Naive thymus-derived CD4-positive, alpha-beta T cell (primary cell): ENCODE measurements at regions of chr3 and their contacts with region 1.

Region 1: GRCh38 chr3:169812332-169813235 is at the starts of genes LRRC34 and LRRIQ4:
- DNase-seq: peak; percentile 43 to 72 (median 52)
- ATAC-seq: peak; percentile 72
- H3K4me3 ChIP-seq: peak within 1 kb of the TSS; percentile 85
- H3K4me3 Mint-ChIP-seq: peak within 1 kb of the TSS; percentile 79 to 91 (median 86)
- H3K27ac ChIP-seq: peak within 1 kb of the TSS; percentile 59
- H3K27ac Mint-ChIP-seq: peak within 1 kb of the TSS; percentile 3 to 92 (median 71)
- H3K4me1 ChIP-seq: peaks cover 4 to 6% of the 10 kb centered on the region in 2 donors
- H3K4me1 Mint-ChIP-seq: peaks cover 21 to 40% (median 25%) of the 10 kb centered on the region in 7 donors
- H3K27me3 ChIP-seq: no peaks in the 10 kb centered on the region
- H3K27me3 Mint-ChIP-seq: peaks cover 0 to 18% (median 2%) of the 10 kb centered on the region in 5 donors
- total RNA-seq, gene LRRC34: 0.30 to 3.7 (median 0.42) TPM
- total RNA-seq, gene LRRIQ4: 0.12 TPM in 1 of 5 experiments, not detected in the others

Region 2: GRCh38 chr3:169218314-169218983 is 594.1 kb before region 1 on chr3:
- CTCF ChIA-PET with region 1: no interaction called
- POLR2A ChIA-PET with region 1: no interaction called
- intact Hi-C with region 1: no loop called
- DNase-seq: no peak
- ATAC-seq: no peak
- H3K4me3 ChIP-seq: no peak overlapping the region
- H3K4me3 Mint-ChIP-seq: no peak overlapping the region
- H3K27ac ChIP-seq: no peak overlapping the region
- H3K27ac Mint-ChIP-seq: no peak overlapping the region
- H3K4me1 ChIP-seq: no peaks in the 10 kb centered on the region
- H3K4me1 Mint-ChIP-seq: no peaks in the 10 kb centered on the region
- H3K27me3 ChIP-seq: no peaks in the 10 kb centered on the region
- H3K27me3 Mint-ChIP-seq: peaks cover 0 to 12% (median 0%) of the 10 kb centered on the region in 5 donors

Region 3: DNA sequence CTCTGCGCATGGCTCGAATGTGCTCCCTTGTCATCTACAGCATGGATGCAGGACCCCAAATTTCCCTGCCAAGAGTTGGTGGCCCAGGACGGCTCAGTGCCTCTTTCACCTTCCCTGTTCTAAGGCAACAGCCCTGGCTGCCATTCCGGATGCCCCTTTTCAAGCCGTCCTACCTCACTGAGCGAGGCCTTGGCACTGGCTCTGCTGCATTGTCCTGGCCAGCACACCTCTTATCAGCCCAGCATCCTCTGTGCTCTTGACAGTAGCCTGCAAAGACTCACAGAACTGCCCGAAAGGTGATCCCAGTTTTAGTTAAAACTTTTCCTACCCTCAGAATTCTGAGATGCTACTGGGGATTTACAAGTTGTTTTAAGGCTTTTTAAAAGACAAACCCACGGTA is 271.1 kb before region 1 on chr3:
- CTCF ChIA-PET with region 1: no interaction called
- POLR2A ChIA-PET with region 1: no interaction called
- intact Hi-C with region 1: no loop called
- DNase-seq: no peak
- ATAC-seq: no peak
- H3K4me3 ChIP-seq: no peak overlapping the region
- H3K4me3 Mint-ChIP-seq: no peak overlapping the region
- H3K27ac ChIP-seq: no peak overlapping the region
- H3K27ac Mint-ChIP-seq: no peak overlapping the region
- H3K4me1 ChIP-seq: no peaks in the 10 kb centered on the region
- H3K4me1 Mint-ChIP-seq: no peaks in the 10 kb centered on the region
- H3K27me3 ChIP-seq: no peaks in the 10 kb centered on the region
- H3K27me3 Mint-ChIP-seq: peaks cover 3 to 12% (median 6%) of the 10 kb centered on the region in 5 donors

Region 4: GRCh38 chr3:169772897-169773828 is 39.4 kb before region 1 on chr3 and contains the start of gene MYNN:
- CTCF ChIA-PET with region 1: interaction called, 3 read pairs
- POLR2A ChIA-PET with region 1: interaction called, 11 read pairs
- intact Hi-C with region 1: loop called (anchors 1 kb)
- DNase-seq: peak; percentile 87 to 95 (median 93)
- ATAC-seq: peak; percentile 90
- H3K4me3 ChIP-seq: peak within 1 kb of the TSS; percentile 87
- H3K4me3 Mint-ChIP-seq: peak within 1 kb of the TSS; percentile 91 to 99 (median 97)
- H3K27ac ChIP-seq: peak within 1 kb of the TSS; percentile 100
- H3K27ac Mint-ChIP-seq: peak within 1 kb of the TSS; percentile 96 to 100 (median 99)
- H3K4me1 ChIP-seq: peaks cover 15 to 22% of the 10 kb centered on the region in 2 donors
- H3K4me1 Mint-ChIP-seq: peaks cover 18 to 69% (median 56%) of the 10 kb centered on the region in 7 donors
- H3K27me3 ChIP-seq: no peaks in the 10 kb centered on the region
- H3K27me3 Mint-ChIP-seq: peaks cover 0 to 5% (median 0%) of the 10 kb centered on the region in 5 donors
- total RNA-seq, gene MYNN: 16.2 to 20.8 (median 19.0) TPM

Region 5: DNA sequence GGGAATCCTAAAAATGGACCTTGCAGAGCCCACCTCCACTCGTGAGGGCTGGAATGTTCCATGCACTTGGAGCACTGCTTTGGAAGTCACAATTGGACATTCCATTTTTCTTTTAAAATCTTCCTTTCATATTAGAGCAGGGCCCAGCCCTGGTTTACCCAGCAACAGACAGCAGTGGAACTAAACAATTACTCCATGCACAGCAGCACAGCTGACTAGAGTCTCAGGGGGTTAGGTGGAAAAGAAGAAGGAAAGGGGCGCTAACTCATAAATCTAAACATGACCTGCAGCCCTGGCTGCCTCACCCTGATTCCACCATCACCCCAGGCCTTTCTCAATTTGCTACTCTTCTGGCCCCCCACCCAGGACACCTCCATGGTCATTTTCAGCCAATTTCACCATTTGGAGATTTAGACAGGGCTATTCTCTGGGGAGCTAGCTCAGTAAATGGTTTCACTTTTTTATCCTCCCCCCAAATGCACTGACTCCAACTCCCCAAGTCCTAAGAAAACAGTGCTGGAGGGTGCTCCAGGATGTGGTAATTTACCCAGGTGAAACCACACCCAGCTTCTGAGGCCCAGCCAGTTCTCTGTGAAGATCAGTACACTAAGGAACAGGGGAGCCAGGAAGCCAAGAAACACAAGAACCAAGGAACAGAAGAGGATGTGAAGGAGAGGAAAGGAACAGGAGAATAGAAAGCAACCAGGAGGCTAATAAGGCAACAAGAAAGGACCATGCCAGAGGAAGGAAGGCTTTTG is 58.7 kb after region 1 on chr3:
- CTCF ChIA-PET with region 1: no interaction called
- POLR2A ChIA-PET with region 1: no interaction called
- intact Hi-C with region 1: loop called in 1 of 2 experiments (anchors 1 kb)
- DNase-seq: peak in 7 of 9 donors; percentile 8 to 59 (median 42)
- ATAC-seq: no peak
- H3K4me3 ChIP-seq: no peak overlapping the region
- H3K4me3 Mint-ChIP-seq: peak overlapping the region; percentile 38 to 78 (median 62)
- H3K27ac ChIP-seq: no peak overlapping the region
- H3K27ac Mint-ChIP-seq: peak overlapping the region; percentile 9 to 84 (median 65)
- H3K4me1 ChIP-seq: peaks cover 0 to 18% of the 10 kb centered on the region in 2 donors
- H3K4me1 Mint-ChIP-seq: peaks cover 14 to 46% (median 27%) of the 10 kb centered on the region in 7 donors
- H3K27me3 ChIP-seq: no peaks in the 10 kb centered on the region
- H3K27me3 Mint-ChIP-seq: peaks cover 0 to 2% (median 0%) of the 10 kb centered on the region in 5 donors

Region 6: DNA sequence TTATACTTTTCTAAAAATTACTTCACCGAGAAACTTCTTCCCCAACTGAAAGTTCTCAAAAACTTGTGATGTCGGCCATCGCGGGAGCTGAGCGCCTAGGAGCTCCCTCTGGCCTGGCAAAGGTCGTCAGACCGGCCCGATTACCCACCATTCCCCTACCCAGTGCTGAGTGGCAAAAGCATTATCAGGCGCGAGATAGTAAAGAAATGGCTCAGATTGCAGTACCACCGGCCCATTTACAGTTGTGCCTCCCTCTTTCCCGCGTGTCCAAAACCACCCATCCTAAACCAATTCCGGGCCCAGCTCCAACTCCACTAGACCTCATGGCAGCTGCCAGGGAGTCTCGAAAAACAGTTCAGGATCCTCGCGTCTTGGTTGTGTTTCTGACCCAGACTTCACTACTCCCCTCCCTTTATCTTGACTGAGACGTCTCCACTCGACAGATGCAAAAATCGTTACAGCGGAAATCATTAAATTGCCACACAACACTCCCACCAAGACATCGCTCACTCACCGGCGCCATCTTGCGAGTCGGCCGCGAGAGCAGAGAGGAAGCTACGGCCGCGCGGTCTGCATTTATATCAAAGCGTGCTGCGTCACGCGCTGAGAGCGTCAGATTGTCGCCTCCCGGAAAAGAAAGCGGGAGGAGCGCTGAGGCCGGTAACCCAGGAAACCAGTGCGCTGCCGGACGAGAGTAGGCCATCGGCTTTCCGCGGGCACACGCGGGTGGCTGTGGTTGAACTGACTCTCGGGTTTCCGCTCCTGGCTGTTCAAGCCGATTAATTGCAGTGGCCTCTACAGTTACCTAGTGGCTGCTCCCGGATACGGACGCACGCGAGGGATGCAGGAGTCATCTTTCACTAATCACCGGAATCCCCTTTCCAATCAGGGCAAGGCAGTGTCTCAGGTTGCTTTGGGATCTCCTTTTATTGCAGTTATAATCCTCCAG is 1057.3 kb after region 1 on chr3 and contains the start of gene RPL22L1:
- CTCF ChIA-PET with region 1: no interaction called
- POLR2A ChIA-PET with region 1: no interaction called
- intact Hi-C with region 1: loop called (anchors 1 to 5 kb)
- DNase-seq: peak; percentile 83 to 92 (median 90)
- ATAC-seq: peak; percentile 96
- H3K4me3 ChIP-seq: peak within 1 kb of the TSS; percentile 84
- H3K4me3 Mint-ChIP-seq: peak within 1 kb of the TSS; percentile 93 to 98 (median 94)
- H3K27ac ChIP-seq: peak within 1 kb of the TSS; percentile 86
- H3K27ac Mint-ChIP-seq: peak within 1 kb of the TSS; percentile 96 to 99 (median 98)
- H3K4me1 ChIP-seq: peaks cover 22% of the 10 kb centered on the region in 2 donors
- H3K4me1 Mint-ChIP-seq: peaks cover 10 to 41% (median 26%) of the 10 kb centered on the region in 7 donors
- H3K27me3 ChIP-seq: no peaks in the 10 kb centered on the region
- H3K27me3 Mint-ChIP-seq: peaks cover 0 to 4% (median 0%) of the 10 kb centered on the region in 5 donors
- total RNA-seq, gene RPL22L1: 27.5 to 62.6 (median 47.9) TPM